Activated naive CD4-positive, alpha-beta T cell treated with anti-CD3 and anti-CD28 coated beads for 36 hours (primary cell): ENCODE measurements at regions of chr15 and their contacts with region 1.

Region 1: DNA sequence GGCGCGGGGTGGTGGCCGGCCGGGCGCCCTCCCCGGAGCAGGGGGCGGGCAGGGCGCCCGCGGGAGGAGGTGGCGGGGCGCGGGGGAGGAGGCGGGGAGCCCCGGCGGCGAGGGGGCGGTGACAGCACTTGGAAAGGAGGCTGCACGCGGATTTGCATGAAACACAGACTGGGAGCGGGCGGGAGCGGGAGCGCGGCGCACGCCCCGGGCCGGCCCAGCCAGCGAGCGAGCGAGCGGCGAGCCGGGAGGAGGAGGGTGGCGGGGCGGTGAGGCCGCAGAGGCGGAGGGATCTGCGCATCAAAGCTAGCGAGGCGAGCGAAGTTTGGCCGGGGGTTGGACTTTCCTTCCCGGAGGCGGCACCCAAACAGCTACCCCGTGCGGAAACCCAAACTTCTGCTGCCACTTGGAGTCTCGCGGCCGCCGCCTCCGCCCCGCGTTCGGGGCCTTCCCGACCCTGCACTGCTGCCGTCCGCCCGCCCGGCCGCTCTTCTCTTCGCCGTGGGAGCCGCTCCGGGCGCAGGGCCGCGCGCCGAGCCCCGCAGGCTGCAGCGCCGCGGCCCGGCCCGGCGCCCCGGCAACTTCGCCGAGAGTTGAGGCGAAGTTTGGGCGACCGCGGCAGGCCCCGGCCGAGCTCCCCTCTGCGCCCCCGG is at the start of gene SMAD3:
- DNase-seq: peak; percentile 80
- H3K4me3 Mint-ChIP-seq: peak within 1 kb of the TSS; percentile 95
- H3K27ac Mint-ChIP-seq: peak within 1 kb of the TSS; percentile 89
- H3K4me1 Mint-ChIP-seq: peaks cover 50% of the 10 kb centered on the region
- H3K27me3 Mint-ChIP-seq: peaks cover 17% of the 10 kb centered on the region
- total RNA-seq, gene SMAD3: 35.1 to 39.2 TPM

Region 2: DNA sequence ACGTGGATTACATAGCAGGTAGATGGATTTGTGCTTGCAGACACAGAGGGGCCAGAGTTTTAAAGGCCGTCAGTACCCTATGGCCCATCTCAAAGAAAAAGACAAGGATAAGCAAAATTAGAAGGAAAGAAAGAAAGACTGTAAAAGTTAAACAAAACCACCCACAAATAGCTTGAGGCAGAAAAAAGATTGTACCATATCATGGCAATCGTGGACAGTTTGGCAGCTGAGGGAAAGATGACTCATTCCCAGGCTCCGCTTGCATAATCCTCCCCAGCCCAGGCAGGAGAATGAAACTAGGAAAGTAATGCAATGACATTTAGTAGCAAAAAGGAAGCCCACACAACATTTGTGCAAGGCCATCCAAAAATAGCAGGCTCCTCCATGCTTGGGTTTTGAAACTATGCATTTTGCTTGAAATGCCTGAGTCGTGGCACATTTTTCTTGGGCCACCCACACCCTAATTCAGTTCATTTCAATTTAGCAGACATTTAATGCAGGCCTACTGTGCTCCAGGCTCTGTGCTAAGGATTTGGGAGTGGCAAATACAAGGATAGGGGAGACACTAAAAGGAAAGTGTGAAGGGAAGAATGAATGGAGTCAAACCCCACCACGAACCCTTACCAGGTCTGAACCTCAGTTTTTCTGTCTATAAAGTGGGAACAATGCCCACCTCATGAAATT is 41.1 kb before region 1 on chr15:
- CTCF ChIA-PET with region 1: no interaction called
- intact Hi-C with region 1: loop called (anchors 2 kb)
- DNase-seq: peak; percentile 64
- H3K4me3 Mint-ChIP-seq: no peak overlapping the region
- H3K27ac Mint-ChIP-seq: no peak overlapping the region
- H3K4me1 Mint-ChIP-seq: peaks cover 25% of the 10 kb centered on the region
- H3K27me3 Mint-ChIP-seq: no peaks in the 10 kb centered on the region

Region 3: DNA sequence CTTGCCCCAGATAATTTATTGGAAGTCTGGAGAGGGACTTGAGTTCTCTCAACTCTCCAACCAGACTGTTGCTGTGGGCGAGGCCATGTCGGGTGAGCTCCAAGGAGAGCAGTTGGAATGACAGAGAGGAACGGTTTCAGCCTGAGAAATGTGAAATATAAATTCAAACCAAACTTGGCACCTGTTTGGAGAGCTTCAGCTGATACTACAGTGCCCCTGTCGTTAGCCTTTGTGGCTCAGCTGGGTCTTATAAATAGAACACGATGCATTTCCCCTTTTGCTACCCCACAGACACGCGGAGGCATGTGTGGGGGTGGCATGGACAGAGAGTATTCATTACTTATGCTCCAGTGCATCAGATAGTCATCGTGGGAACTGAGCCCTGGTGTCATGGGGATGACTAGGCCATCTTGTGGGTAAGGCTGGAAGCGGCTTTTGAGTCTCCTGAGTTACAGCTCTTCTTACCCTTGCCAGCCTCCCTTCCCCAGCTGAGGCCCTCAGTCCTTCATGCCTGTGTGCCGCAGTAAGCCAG is 15.4 kb after region 1 on chr15:
- CTCF ChIA-PET with region 1: interaction called, 21 read pairs
- intact Hi-C with region 1: loop called (anchors 1 kb)
- DNase-seq: peak; percentile 83
- H3K4me3 Mint-ChIP-seq: no peak overlapping the region
- H3K27ac Mint-ChIP-seq: peak overlapping the region; percentile 76
- H3K4me1 Mint-ChIP-seq: peaks cover 80% of the 10 kb centered on the region
- H3K27me3 Mint-ChIP-seq: no peaks in the 10 kb centered on the region

Region 4: GRCh38 chr15:67085818-67086636 is 20.5 kb after region 1 on chr15:
- CTCF ChIA-PET with region 1: interaction called, 21 read pairs
- intact Hi-C with region 1: loop called (anchors 1 kb)
- DNase-seq: peak; percentile 44
- H3K4me3 Mint-ChIP-seq: no peak overlapping the region
- H3K27ac Mint-ChIP-seq: peak overlapping the region; percentile 78
- H3K4me1 Mint-ChIP-seq: peaks cover 88% of the 10 kb centered on the region
- H3K27me3 Mint-ChIP-seq: no peaks in the 10 kb centered on the region